Lower lobe of right lung (tissue), 2 donors: ENCODE measurements at regions of chr1 and their contacts with region 1.

Region 1: GRCh38 chr1:161486806-161487741 is 18.2 kb upstream of the FCGR2A start:
- DNase-seq: no peak
- ATAC-seq: peak; percentile 83 to 92
- H3K4me3 ChIP-seq: peak overlapping the region; percentile 27
- H3K27ac ChIP-seq: no peak overlapping the region
- H3K4me1 ChIP-seq: peaks cover 8% of the 10 kb centered on the region
- H3K27me3 ChIP-seq: no peaks in the 10 kb centered on the region
- CTCF ChIP-seq: peak; percentile 75

Region 2: DNA sequence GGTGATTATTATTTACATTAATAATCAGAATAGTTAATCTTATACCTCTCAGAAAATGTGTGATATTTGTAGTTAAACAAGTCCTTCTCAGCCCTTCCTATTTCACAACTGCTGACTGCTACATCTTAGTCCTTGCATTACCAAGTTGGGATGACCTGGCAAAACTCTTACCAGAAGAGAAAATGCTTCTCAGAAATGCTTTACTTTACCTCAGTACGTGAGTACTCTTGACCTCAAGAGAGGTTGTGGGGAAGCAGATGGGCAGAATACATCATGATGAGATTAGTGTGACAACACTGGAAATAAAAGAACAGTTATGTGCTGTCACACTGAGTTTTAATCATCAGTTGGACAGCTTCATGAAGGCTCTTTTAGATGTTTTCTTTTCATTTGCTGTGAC is 135.6 kb before region 1 on chr1:
- intact Hi-C with region 1: no loop called
- DNase-seq: no peak
- ATAC-seq: peak in 1 of 2 donors; percentile 53
- H3K4me3 ChIP-seq: no peak overlapping the region
- H3K27ac ChIP-seq: no peak overlapping the region
- H3K4me1 ChIP-seq: no peaks in the 10 kb centered on the region
- H3K27me3 ChIP-seq: no peaks in the 10 kb centered on the region
- CTCF ChIP-seq: no peak

Region 3: DNA sequence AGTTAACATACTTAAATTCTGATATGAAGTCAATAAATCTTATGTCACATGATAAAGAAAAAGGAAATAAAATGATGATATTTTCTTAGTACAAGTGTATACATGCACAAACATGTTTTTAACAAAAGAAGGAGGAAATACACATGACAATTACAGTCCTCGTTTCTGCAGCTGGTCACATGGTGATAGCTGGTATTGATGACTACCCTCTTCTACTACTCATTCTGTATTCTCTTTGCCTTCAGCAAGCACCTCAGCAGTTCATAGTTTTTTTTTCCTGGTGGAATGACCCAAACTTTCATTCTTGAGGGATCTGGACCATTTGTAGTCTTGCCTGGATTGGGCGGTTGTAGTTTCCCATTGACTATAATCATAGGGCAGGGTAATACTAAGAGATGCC is 55.0 kb before region 1 on chr1:
- intact Hi-C with region 1: no loop called
- DNase-seq: no peak
- ATAC-seq: no peak
- H3K4me3 ChIP-seq: no peak overlapping the region
- H3K27ac ChIP-seq: no peak overlapping the region
- H3K4me1 ChIP-seq: no peaks in the 10 kb centered on the region
- H3K27me3 ChIP-seq: no peaks in the 10 kb centered on the region
- CTCF ChIP-seq: no peak

Region 4: GRCh38 chr1:161733526-161733925 is 246.5 kb after region 1 on chr1:
- intact Hi-C with region 1: no loop called
- DNase-seq: no peak
- ATAC-seq: no peak
- H3K4me3 ChIP-seq: no peak overlapping the region
- H3K27ac ChIP-seq: no peak overlapping the region
- H3K4me1 ChIP-seq: peaks cover 4% of the 10 kb centered on the region
- H3K27me3 ChIP-seq: no peaks in the 10 kb centered on the region
- CTCF ChIP-seq: no peak

Region 5: GRCh38 chr1:161749509-161750407 is 262.7 kb after region 1 on chr1 and contains the start of gene DUSP12:
- intact Hi-C with region 1: loop called (anchors 10 kb)
- DNase-seq: peak; percentile 95
- ATAC-seq: peak; percentile 99 to 100
- H3K4me3 ChIP-seq: peak within 1 kb of the TSS; percentile 98
- H3K27ac ChIP-seq: peak within 1 kb of the TSS; percentile 91
- H3K4me1 ChIP-seq: peaks cover 20% of the 10 kb centered on the region
- H3K27me3 ChIP-seq: no peaks in the 10 kb centered on the region
- CTCF ChIP-seq: peak; percentile 21
- total RNA-seq, gene DUSP12: 16.4 TPM